ENCODE measurements at regions of chr16 and their contacts with region 1.

Region 1: GRCh38 chr16:66588981-66589713 is 9.9 kb downstream of the CMTM2 start:
- DNase-seq: peak; percentile 45 to 87 (median 63)
- ATAC-seq: peak; percentile 93
- H3K4me3 ChIP-seq: no peak overlapping the region
- H3K4me3 Mint-ChIP-seq: peak overlapping the region; percentile 79
- H3K27ac ChIP-seq: no peak overlapping the region
- H3K27ac Mint-ChIP-seq: peak overlapping the region; percentile 52
- H3K4me1 ChIP-seq: peaks cover 26% of the 10 kb centered on the region
- H3K4me1 Mint-ChIP-seq: peaks cover 33% of the 10 kb centered on the region
- H3K27me3 ChIP-seq: no peaks in the 10 kb centered on the region
- H3K27me3 Mint-ChIP-seq: no peaks in the 10 kb centered on the region
- CTCF ChIP-seq: peak; percentile 74

Region 2: DNA sequence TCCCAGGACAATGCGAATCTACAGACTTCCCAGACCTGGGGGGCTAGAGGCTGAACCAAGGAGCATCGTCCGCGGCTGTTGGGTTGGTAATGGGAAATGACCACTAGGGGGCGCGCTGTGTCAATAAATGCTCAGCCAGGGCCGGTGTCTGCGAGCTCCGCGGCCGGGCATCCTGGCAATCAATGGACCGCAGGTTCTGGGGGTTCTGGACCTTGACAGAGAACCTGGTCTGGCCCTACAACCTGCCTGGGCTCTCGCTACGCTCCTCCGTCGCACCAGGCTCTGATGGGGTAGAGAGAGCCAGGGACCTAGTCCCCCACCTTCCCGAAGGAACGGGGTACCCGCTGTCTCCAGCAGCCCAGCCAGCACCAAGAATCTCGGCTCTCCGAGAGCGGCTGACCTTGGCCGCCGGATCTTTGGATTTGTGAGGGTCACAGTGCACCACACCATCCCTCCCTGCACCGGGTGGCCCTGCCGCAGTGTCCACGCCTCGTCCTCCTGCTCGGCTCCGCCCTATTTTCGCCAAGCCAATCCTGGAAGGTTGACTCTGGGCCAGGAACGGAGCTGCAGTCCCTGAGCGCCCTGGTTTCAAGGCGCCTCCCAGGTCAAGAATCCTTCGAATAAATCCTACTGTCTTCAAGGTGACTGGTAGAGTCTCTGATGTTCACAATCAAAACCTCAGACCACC is 182.5 kb before region 1 on chr16:
- CTCF ChIA-PET with region 1: interaction called, 14 read pairs
- POLR2A ChIA-PET with region 1: interaction called, 9 read pairs
- intact Hi-C with region 1: loop called (anchors 1 to 2 kb)
- DNase-seq: peak; percentile 75 to 93 (median 88)
- ATAC-seq: peak; percentile 72
- H3K4me3 ChIP-seq: peak overlapping the region; percentile 83
- H3K4me3 Mint-ChIP-seq: peak overlapping the region; percentile 85
- H3K27ac ChIP-seq: no peak overlapping the region
- H3K27ac Mint-ChIP-seq: peak overlapping the region; percentile 62
- H3K4me1 ChIP-seq: peaks cover 28% of the 10 kb centered on the region
- H3K4me1 Mint-ChIP-seq: peaks cover 27% of the 10 kb centered on the region
- H3K27me3 ChIP-seq: no peaks in the 10 kb centered on the region
- H3K27me3 Mint-ChIP-seq: no peaks in the 10 kb centered on the region
- CTCF ChIP-seq: peak; percentile 93

Region 3: GRCh38 chr16:66427036-66427860 is 161.9 kb before region 1 on chr16 and contains the start of gene BEAN1:
- CTCF ChIA-PET with region 1: no interaction called
- POLR2A ChIA-PET with region 1: no interaction called
- intact Hi-C with region 1: no loop called
- DNase-seq: peak in 1 of 14 experiments; percentile 10
- ATAC-seq: peak; percentile 34
- H3K4me3 ChIP-seq: peak within 1 kb of the TSS; percentile 20
- H3K4me3 Mint-ChIP-seq: peak within 1 kb of the TSS; percentile 76
- H3K27ac ChIP-seq: no peak within 1 kb of the TSS
- H3K27ac Mint-ChIP-seq: no peak within 1 kb of the TSS
- H3K4me1 ChIP-seq: peaks cover 15% of the 10 kb centered on the region
- H3K4me1 Mint-ChIP-seq: peaks cover 4% of the 10 kb centered on the region
- H3K27me3 ChIP-seq: peaks cover 42 to 61% of the 10 kb centered on the region in 2 experiments
- H3K27me3 Mint-ChIP-seq: peaks cover 83% of the 10 kb centered on the region
- CTCF ChIP-seq: no peak
- total RNA-seq, gene BEAN1: not detected

Region 4: DNA sequence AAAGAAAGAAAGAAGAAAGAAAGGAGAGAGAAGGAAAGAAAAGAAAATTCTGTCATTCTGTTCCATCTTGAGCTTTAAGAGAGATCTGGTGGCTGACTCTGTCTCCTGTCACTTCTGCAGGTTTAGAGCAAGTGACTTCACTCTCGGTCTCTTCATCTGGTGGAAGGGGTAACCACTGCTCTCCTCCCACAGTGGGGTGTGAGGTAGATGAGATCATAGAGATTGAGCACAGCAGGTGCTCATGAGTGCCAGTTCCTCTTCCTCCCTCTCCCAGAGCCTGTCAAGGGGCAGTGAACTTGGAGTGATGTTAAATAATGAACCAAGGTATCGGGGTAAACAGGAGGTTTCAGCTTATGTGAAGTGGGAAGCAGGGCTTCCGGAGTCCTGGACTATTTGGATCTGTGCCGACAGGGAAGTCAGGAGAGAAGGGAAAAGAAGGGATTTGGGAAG is 114.4 kb before region 1 on chr16:
- CTCF ChIA-PET with region 1: interaction called, 18 read pairs
- POLR2A ChIA-PET with region 1: interaction called, 4 read pairs
- intact Hi-C with region 1: loop called (anchors 1 kb)
- DNase-seq: peak in 13 of 14 experiments; percentile 12 to 86 (median 49)
- ATAC-seq: peak; percentile 90
- H3K4me3 ChIP-seq: no peak overlapping the region
- H3K4me3 Mint-ChIP-seq: no peak overlapping the region
- H3K27ac ChIP-seq: no peak overlapping the region
- H3K27ac Mint-ChIP-seq: peak overlapping the region; percentile 61
- H3K4me1 ChIP-seq: peaks cover 47% of the 10 kb centered on the region
- H3K4me1 Mint-ChIP-seq: peaks cover 38% of the 10 kb centered on the region
- H3K27me3 ChIP-seq: no peaks in the 10 kb centered on the region
- H3K27me3 Mint-ChIP-seq: no peaks in the 10 kb centered on the region
- CTCF ChIP-seq: no peak

Region 5: GRCh38 chr16:66511615-66512500 is 77.3 kb before region 1 on chr16:
- CTCF ChIA-PET with region 1: interaction called, 15 read pairs
- POLR2A ChIA-PET with region 1: no interaction called
- intact Hi-C with region 1: loop called (anchors 1 to 2 kb)
- DNase-seq: peak in 4 of 14 experiments; percentile 36 to 46 (median 40)
- ATAC-seq: no peak
- H3K4me3 ChIP-seq: no peak overlapping the region
- H3K4me3 Mint-ChIP-seq: no peak overlapping the region
- H3K27ac ChIP-seq: no peak overlapping the region
- H3K27ac Mint-ChIP-seq: no peak overlapping the region
- H3K4me1 ChIP-seq: peaks cover 52% of the 10 kb centered on the region
- H3K4me1 Mint-ChIP-seq: peaks cover 24% of the 10 kb centered on the region
- H3K27me3 ChIP-seq: no peaks in the 10 kb centered on the region
- H3K27me3 Mint-ChIP-seq: no peaks in the 10 kb centered on the region
- CTCF ChIP-seq: no peak

Region 6: GRCh38 chr16:66552286-66553177 is 36.6 kb before region 1 on chr16 and contains the start of gene CKLF:
- CTCF ChIA-PET with region 1: interaction called, 10 read pairs
- POLR2A ChIA-PET with region 1: interaction called, 20 read pairs
- intact Hi-C with region 1: loop called in 1 of 2 experiments (anchors 5 kb)
- DNase-seq: peak; percentile 81 to 97 (median 90)
- ATAC-seq: peak; percentile 68
- H3K4me3 ChIP-seq: peak within 1 kb of the TSS; percentile 85
- H3K4me3 Mint-ChIP-seq: peak within 1 kb of the TSS; percentile 92
- H3K27ac ChIP-seq: peak within 1 kb of the TSS; percentile 79 to 81
- H3K27ac Mint-ChIP-seq: peak within 1 kb of the TSS; percentile 93
- H3K4me1 ChIP-seq: peaks cover 81% of the 10 kb centered on the region
- H3K4me1 Mint-ChIP-seq: peaks cover 86% of the 10 kb centered on the region
- H3K27me3 ChIP-seq: no peaks in the 10 kb centered on the region
- H3K27me3 Mint-ChIP-seq: no peaks in the 10 kb centered on the region
- CTCF ChIP-seq: no peak
- total RNA-seq, gene CKLF: 10.6 to 14.1 TPM

Region 7: DNA sequence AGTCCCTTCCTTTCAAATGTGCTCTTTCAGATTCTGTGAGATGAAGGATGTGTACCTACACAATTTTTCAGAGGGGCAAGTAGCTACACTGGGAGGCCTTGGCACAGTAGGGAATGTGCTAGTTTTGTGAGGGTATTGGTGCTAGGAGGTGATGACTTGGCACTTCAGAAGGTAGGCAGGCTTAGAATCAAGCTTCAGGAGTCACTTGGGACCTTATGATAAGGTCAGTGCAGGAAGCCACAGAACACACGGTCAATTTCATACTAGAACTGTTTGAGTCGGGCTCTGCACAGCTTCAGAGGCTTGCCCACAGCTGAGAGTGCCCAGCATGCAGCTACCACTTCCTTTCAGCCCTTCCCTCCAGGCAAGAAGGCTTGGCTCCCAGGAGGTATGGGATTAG is 16.8 kb before region 1 on chr16:
- CTCF ChIA-PET with region 1: interaction called, 13 read pairs
- POLR2A ChIA-PET with region 1: no interaction called
- intact Hi-C with region 1: no loop called
- DNase-seq: no peak
- ATAC-seq: no peak
- H3K4me3 ChIP-seq: no peak overlapping the region
- H3K4me3 Mint-ChIP-seq: no peak overlapping the region
- H3K27ac ChIP-seq: no peak overlapping the region
- H3K27ac Mint-ChIP-seq: no peak overlapping the region
- H3K4me1 ChIP-seq: no peaks in the 10 kb centered on the region
- H3K4me1 Mint-ChIP-seq: peaks cover 5% of the 10 kb centered on the region
- H3K27me3 ChIP-seq: no peaks in the 10 kb centered on the region
- H3K27me3 Mint-ChIP-seq: peaks cover 2% of the 10 kb centered on the region
- CTCF ChIP-seq: no peak

Region 8: GRCh38 chr16:67150833-67151396 is 561.8 kb after region 1 on chr16 and contains the start of gene B3GNT9:
- CTCF ChIA-PET with region 1: no interaction called
- POLR2A ChIA-PET with region 1: no interaction called
- intact Hi-C with region 1: no loop called
- DNase-seq: peak in 5 of 14 experiments; percentile 11 to 63 (median 51)
- ATAC-seq: peak; percentile 27
- H3K4me3 ChIP-seq: peak within 1 kb of the TSS; percentile 57
- H3K4me3 Mint-ChIP-seq: peak within 1 kb of the TSS; percentile 79
- H3K27ac ChIP-seq: no peak within 1 kb of the TSS
- H3K27ac Mint-ChIP-seq: peak within 1 kb of the TSS; percentile 55
- H3K4me1 ChIP-seq: peaks cover 51% of the 10 kb centered on the region
- H3K4me1 Mint-ChIP-seq: peaks cover 24% of the 10 kb centered on the region
- H3K27me3 ChIP-seq: no peaks in the 10 kb centered on the region
- H3K27me3 Mint-ChIP-seq: peaks cover 14% of the 10 kb centered on the region
- CTCF ChIP-seq: no peak
- total RNA-seq, gene B3GNT9: 2.0 to 2.5 TPM

Measured in CD4-positive, alpha-beta T cell (primary cell).